ENCODE measurements at regions of chr1 and their contacts with region 1.

Region 1: GRCh38 chr1:116485071-116485735 is 85.6 kb downstream of the CD58 start:
- DNase-seq: peak; percentile 85
- H3K4me3 ChIP-seq: peak overlapping the region in 1 of 2 experiments; percentile 33; a peak in 1 of 4 replicates
- H3K27ac ChIP-seq: peak overlapping the region in 1 of 2 experiments; percentile 58; a peak in 2 of 4 replicates
- H3K4me1 ChIP-seq: peaks cover 15 to 48% of the 10 kb centered on the region in 2 experiments; a peak in 3 of 4 replicates
- H3K27me3 ChIP-seq: no peaks in the 10 kb centered on the region
- CTCF ChIP-seq: peak; percentile 92
- EP300 ChIP-seq: no peak
- RAD21 ChIP-seq: peak; percentile 96

Region 2: GRCh38 chr1:116128664-116129063 is 356.5 kb before region 1 on chr1:
- CTCF ChIA-PET with region 1: interaction called, 41 read pairs
- POLR2A ChIA-PET with region 1: no interaction called
- DNase-seq: no peak
- H3K4me3 ChIP-seq: no peak overlapping the region
- H3K27ac ChIP-seq: no peak overlapping the region
- H3K4me1 ChIP-seq: peaks cover 0 to 5% of the 10 kb centered on the region in 2 experiments; a peak in 2 of 4 replicates
- H3K27me3 ChIP-seq: peaks cover 10% of the 10 kb centered on the region; the same call in 1 of the 2 replicates
- CTCF ChIP-seq: no peak
- EP300 ChIP-seq: no peak
- RAD21 ChIP-seq: no peak

Region 3: DNA sequence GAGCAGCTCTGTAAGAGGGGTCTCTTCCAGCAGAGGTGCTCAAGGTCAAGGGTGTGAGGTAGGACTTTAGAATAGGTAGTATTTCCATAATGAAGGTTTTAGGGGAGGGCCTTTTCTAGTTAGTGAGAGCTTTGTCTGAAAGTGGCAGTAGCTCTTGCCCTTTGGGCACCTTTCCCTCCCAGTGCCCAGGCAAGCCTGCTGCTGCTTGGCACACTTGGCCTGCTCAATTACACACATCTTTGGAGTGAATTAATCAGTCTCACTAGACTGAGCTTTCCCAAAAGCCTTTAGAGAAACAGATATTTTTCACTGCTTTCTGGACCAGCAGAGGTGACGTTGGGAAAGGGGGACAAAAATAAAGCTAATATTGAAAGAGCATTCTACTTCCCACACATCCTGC is 326.0 kb before region 1 on chr1:
- CTCF ChIA-PET with region 1: interaction called, 1,099 read pairs
- POLR2A ChIA-PET with region 1: no interaction called
- DNase-seq: no peak
- H3K4me3 ChIP-seq: no peak overlapping the region
- H3K27ac ChIP-seq: no peak overlapping the region
- H3K4me1 ChIP-seq: peaks cover 0 to 3% of the 10 kb centered on the region in 2 experiments; a peak in 1 of 4 replicates
- H3K27me3 ChIP-seq: no peaks in the 10 kb centered on the region
- CTCF ChIP-seq: no peak
- EP300 ChIP-seq: no peak
- RAD21 ChIP-seq: no peak

Region 4: DNA sequence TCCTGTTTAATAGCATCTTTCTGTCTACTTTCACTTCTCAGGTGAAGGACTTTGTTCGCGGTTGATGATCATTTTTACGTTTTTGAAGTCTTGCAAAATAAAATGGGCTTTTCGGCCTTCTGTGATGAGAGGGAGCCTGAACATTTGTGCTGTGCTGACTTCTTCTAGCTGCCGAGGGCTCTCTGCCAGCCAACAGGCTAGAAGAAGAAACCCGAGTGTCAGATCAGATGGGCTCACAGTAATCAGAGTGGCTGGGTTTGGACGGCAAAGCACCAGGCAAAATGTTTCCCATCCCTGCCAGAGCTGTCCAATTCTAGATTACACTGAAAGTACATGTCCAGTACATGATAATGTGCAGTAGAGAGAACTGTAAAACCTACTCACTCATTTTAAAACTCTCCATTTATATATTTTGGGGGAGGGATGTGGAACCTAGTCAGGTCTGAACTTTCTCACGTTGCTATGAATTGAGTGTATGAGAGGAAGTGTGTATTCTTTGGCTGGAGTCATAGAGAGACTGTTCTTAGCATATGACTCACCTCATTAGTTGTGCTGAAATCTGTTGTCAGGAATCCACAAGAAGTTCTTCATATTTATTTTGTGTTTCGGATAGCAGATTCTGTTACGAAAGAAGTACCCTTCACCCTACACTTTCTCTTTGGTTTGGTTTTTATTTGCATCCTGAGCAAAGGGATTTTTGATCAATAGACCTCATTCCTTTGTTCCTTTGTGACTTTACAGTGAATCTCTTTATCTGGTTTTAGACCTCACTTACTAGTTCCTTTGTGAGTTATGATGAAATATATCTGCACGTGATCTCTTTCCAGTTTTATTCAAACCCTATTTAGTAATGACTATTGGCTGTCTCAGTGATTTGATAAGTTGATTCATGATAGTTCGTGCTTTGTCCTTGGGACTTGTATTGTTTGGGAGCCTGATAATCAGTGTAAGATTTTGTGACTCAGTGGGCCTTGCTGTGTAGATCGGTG is 107.4 kb before region 1 on chr1:
- CTCF ChIA-PET with region 1: interaction called, 30 read pairs
- POLR2A ChIA-PET with region 1: interaction called, 4 read pairs
- DNase-seq: peak; percentile 38
- H3K4me3 ChIP-seq: peak overlapping the region; percentile 24 to 71; a peak in 3 of 4 replicates
- H3K27ac ChIP-seq: peak overlapping the region; percentile 84 to 98
- H3K4me1 ChIP-seq: peaks cover 47 to 57% of the 10 kb centered on the region in 2 experiments
- H3K27me3 ChIP-seq: no peaks in the 10 kb centered on the region
- CTCF ChIP-seq: no peak
- EP300 ChIP-seq: no peak
- RAD21 ChIP-seq: no peak

Region 5: DNA sequence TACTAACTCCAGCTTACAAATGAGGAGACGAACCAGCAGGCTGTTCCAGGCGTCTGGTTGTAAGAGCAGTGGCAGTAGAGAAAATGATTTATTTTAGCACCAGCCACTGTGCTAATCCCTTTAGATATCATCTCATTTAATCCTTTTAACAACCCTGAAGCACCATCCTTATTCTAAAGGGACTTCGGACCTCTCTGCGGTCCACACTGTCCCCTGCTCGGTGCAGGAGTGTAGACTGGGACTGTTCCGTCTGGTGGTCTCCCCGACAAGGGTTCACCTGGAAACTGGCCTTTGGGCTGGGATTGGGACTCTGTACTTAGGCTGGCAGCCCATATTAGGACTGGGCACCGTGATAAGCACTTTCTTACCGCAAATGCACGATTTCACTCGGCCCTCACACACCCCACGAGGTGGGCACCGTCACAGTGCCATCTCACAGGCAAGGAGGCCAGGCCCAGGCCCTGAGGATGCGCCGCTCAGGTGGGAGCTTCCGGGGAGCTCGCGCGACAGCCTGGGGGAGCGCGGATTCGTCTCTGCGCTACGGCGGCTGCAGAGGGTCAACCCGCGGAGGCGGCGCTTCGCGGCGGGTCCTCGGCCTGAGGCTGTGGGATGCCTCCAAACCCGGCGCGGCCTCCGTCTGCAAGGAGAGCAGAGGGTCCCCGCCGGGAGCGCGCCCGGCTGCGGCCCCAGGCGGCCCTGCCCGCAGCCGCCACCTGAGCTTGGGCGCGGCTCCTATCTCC is 66.9 kb before region 1 on chr1:
- CTCF ChIA-PET with region 1: interaction called, 63 read pairs
- POLR2A ChIA-PET with region 1: interaction called, 7 read pairs
- DNase-seq: peak; percentile 89
- H3K4me3 ChIP-seq: peak overlapping the region; percentile 80 to 90
- H3K27ac ChIP-seq: peak overlapping the region in 1 of 2 experiments; percentile 90; a peak in 3 of 4 replicates
- H3K4me1 ChIP-seq: peaks cover 7 to 24% of the 10 kb centered on the region in 2 experiments; a peak in 3 of 4 replicates
- H3K27me3 ChIP-seq: no peaks in the 10 kb centered on the region
- CTCF ChIP-seq: no peak
- EP300 ChIP-seq: no peak; a peak in 1 of 4 replicates
- RAD21 ChIP-seq: no peak; the same call in 1 of the 2 replicates

Region 6: GRCh38 chr1:116498789-116499628 is 13.8 kb after region 1 on chr1:
- CTCF ChIA-PET with region 1: interaction called, 237 read pairs
- POLR2A ChIA-PET with region 1: interaction called, 4 read pairs
- DNase-seq: peak; percentile 88
- H3K4me3 ChIP-seq: no peak overlapping the region; a peak in 1 of 4 replicates
- H3K27ac ChIP-seq: no peak overlapping the region
- H3K4me1 ChIP-seq: peaks cover 12 to 36% of the 10 kb centered on the region in 2 experiments; a peak in 3 of 4 replicates
- H3K27me3 ChIP-seq: no peaks in the 10 kb centered on the region
- CTCF ChIP-seq: peak; percentile 91
- EP300 ChIP-seq: no peak
- RAD21 ChIP-seq: peak; percentile 96

Region 7: GRCh38 chr1:116664366-116664977 is 179.3 kb after region 1 on chr1:
- CTCF ChIA-PET with region 1: no interaction called
- POLR2A ChIA-PET with region 1: no interaction called
- DNase-seq: no peak
- H3K4me3 ChIP-seq: peak overlapping the region in 1 of 2 experiments; percentile 14; a peak in 1 of 4 replicates
- H3K27ac ChIP-seq: no peak overlapping the region
- H3K4me1 ChIP-seq: peaks cover 0 to 39% of the 10 kb centered on the region in 2 experiments; a peak in 2 of 4 replicates
- H3K27me3 ChIP-seq: peaks cover 17% of the 10 kb centered on the region
- CTCF ChIP-seq: no peak
- EP300 ChIP-seq: no peak
- RAD21 ChIP-seq: no peak

Region 8: GRCh38 chr1:116833718-116834117 is 348.5 kb after region 1 on chr1:
- CTCF ChIA-PET with region 1: no interaction called
- POLR2A ChIA-PET with region 1: no interaction called
- DNase-seq: no peak
- H3K4me3 ChIP-seq: no peak overlapping the region
- H3K27ac ChIP-seq: no peak overlapping the region
- H3K4me1 ChIP-seq: no peaks in the 10 kb centered on the region; a peak in 1 of 4 replicates
- H3K27me3 ChIP-seq: no peaks in the 10 kb centered on the region
- CTCF ChIP-seq: no peak
- EP300 ChIP-seq: no peak
- RAD21 ChIP-seq: no peak